ENCODE measurements at regions of chr7 and their contacts with region 1.

Region 1: GRCh38 chr7:80060218-80060806 is 74.3 kb upstream of the GNAI1 start:
- DNase-seq: peak; percentile 82
- ATAC-seq: peak; percentile 59; the same call in 1 of the 2 replicates
- H3K4me3 ChIP-seq: no peak overlapping the region
- H3K27ac ChIP-seq: no peak overlapping the region
- H3K4me1 ChIP-seq: peaks cover 2% of the 10 kb centered on the region; the same call in 1 of the 2 replicates
- H3K27me3 ChIP-seq: no peaks in the 10 kb centered on the region
- CTCF ChIP-seq: peak; percentile 65
- POLR2A ChIP-seq: no peak
- RAD21 ChIP-seq: peak; percentile 60

Region 2: GRCh38 chr7:80095545-80095944 is 35.2 kb after region 1 on chr7:
- CTCF ChIA-PET with region 1: no interaction called
- POLR2A ChIA-PET with region 1: no interaction called
- dilution Hi-C with region 1: no loop called
- in situ Hi-C with region 1: no loop called
- intact Hi-C with region 1: loop called (anchors 5 kb)
- DNase-seq: peak; percentile 29
- ATAC-seq: no peak; the same call in 1 of the 2 replicates
- H3K4me3 ChIP-seq: no peak overlapping the region
- H3K27ac ChIP-seq: no peak overlapping the region
- H3K4me1 ChIP-seq: no peaks in the 10 kb centered on the region; the same call in 1 of the 2 replicates
- H3K27me3 ChIP-seq: no peaks in the 10 kb centered on the region
- CTCF ChIP-seq: peak; percentile 56
- POLR2A ChIP-seq: no peak
- RAD21 ChIP-seq: peak; percentile 44

Region 3: DNA sequence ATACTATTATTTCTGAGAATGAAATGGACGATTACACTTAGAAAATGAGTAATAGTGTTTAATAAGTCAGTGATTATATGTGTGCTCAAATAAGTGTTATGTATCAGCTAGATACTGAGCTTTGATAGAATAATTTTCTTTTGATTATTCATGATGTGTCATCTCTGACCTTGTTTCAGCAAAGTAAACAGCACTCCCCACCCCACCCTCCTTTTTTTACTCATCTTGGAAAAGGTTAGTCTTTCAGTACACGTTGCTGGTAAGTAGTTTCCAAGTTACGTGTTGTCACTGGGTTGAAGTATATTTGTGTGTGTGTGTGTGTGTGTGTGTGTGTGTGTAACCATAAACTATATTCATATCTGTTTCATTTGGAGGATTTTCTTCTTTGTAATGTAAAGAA is 158.4 kb after region 1 on chr7:
- CTCF ChIA-PET with region 1: no interaction called
- POLR2A ChIA-PET with region 1: no interaction called
- dilution Hi-C with region 1: no loop called
- in situ Hi-C with region 1: no loop called
- intact Hi-C with region 1: loop called (anchors 10 kb)
- DNase-seq: peak; percentile 95
- ATAC-seq: peak; percentile 68
- H3K4me3 ChIP-seq: no peak overlapping the region
- H3K27ac ChIP-seq: no peak overlapping the region
- H3K4me1 ChIP-seq: no peaks in the 10 kb centered on the region
- H3K27me3 ChIP-seq: no peaks in the 10 kb centered on the region
- CTCF ChIP-seq: no peak
- POLR2A ChIP-seq: no peak
- RAD21 ChIP-seq: no peak

Region 4: DNA sequence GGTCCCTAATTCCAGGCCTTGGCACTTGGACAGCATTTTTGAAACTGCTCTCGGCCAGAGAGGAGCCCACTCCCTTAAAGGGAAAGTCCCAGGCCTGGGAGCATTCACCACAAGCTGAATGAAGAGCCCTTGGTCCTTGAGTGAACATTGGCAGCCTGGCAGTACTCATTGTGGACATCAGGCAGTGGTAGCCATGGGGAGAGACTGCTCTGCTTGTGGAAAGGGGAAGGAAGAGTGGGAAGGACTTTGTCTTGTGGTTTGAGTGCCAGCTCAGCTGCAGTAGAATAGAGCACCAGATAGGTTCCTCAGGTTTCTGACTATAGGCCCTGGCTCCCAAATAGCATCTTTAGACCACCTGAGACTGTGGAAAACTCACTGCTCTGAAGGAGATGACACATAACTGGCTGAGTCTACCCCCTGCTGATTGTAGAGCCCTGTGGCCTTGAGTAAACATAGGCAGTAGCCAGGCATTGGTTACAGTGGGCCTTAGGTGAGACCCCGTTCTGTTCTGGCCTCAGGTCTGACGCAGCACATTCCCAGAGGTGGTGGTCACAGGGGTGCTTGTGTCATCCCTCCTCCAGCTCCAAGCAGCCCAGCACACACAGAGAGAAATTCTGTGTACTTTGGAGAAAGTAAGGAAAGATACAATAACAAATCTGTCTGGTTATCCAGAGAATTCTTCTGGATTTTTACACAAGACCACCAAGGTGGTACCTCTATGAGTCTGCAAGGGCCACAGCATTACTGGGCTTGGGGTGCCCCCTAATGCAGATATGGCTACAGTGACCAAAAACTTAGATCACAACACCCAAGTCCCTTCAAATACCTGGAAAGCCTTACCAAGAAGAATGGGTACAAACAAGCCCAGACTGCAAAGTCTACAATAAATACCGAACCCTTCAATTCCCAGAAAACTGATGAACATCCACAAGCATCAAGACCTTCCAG is 228.1 kb after region 1 on chr7:
- CTCF ChIA-PET with region 1: no interaction called
- POLR2A ChIA-PET with region 1: no interaction called
- dilution Hi-C with region 1: no loop called
- in situ Hi-C with region 1: no loop called
- intact Hi-C with region 1: loop called (anchors 5 kb)
- DNase-seq: peak; percentile 84
- ATAC-seq: peak; percentile 65
- H3K4me3 ChIP-seq: no peak overlapping the region
- H3K27ac ChIP-seq: no peak overlapping the region
- H3K4me1 ChIP-seq: no peaks in the 10 kb centered on the region
- H3K27me3 ChIP-seq: no peaks in the 10 kb centered on the region; the same call in 1 of the 2 replicates
- CTCF ChIP-seq: peak; percentile 29; the same call in 1 of the 2 replicates
- POLR2A ChIP-seq: no peak
- RAD21 ChIP-seq: no peak

Region 5: GRCh38 chr7:80453699-80454340 is 393.5 kb after region 1 on chr7:
- CTCF ChIA-PET with region 1: no interaction called
- POLR2A ChIA-PET with region 1: no interaction called
- dilution Hi-C with region 1: no loop called
- in situ Hi-C with region 1: no loop called
- intact Hi-C with region 1: loop called (anchors 1 kb)
- DNase-seq: peak; percentile 56
- ATAC-seq: peak; percentile 48; the same call in 1 of the 2 replicates
- H3K4me3 ChIP-seq: no peak overlapping the region
- H3K27ac ChIP-seq: no peak overlapping the region
- H3K4me1 ChIP-seq: peaks cover 7% of the 10 kb centered on the region; the same call in 1 of the 2 replicates
- H3K27me3 ChIP-seq: no peaks in the 10 kb centered on the region
- CTCF ChIP-seq: peak; percentile 59
- POLR2A ChIP-seq: no peak
- RAD21 ChIP-seq: peak; percentile 71

Measured in IMR-90 (cell line).